Activated B cell treated with CpG ODN at 0.5 μM for 24 hours (primary cell): ENCODE measurements at regions of chr9 and their contacts with region 1.

Region 1: DNA sequence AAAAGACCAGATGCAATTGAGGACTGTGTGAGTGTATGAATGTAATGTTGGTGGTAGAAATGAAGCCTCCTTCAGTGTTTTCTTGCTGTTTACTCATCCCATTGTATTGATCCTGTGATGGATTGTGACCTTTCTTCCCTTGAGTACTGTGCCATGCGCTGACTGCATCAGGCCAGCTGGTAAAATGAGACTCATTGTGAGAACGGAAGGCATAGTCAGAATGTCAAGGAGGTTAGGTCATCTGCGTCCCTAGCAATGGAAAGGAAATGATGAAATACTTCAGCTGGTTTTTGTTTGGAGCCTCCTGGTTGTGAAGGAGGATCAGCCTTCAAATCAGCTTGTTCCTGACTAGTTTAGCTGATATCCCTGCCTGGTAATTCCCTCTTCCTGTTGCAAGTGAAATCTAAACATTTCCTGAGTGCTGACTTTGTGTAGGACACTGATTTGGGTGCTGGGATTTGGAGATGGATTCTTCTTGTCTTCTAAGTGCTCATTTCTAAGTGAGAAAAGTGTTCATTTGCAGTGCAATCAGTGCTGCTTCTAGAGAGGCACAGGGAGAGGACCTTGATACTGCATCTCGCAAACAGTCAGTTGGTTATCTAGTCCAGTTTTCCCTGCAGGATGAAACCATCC is 35.5 kb downstream of the TNFSF8 start:
- DNase-seq: no peak
- ATAC-seq: no peak
- H3K4me3 Mint-ChIP-seq: no peak overlapping the region
- H3K27ac Mint-ChIP-seq: peak overlapping the region; percentile 84
- H3K4me1 Mint-ChIP-seq: peaks cover 52% of the 10 kb centered on the region
- H3K27me3 Mint-ChIP-seq: no peaks in the 10 kb centered on the region
- CTCF ChIP-seq: no peak

Region 2: GRCh38 chr9:114805670-114806525 is 89.0 kb before region 1 on chr9 and contains the start of gene TNFSF15:
- CTCF ChIA-PET with region 1: no interaction called
- POLR2A ChIA-PET with region 1: no interaction called
- intact Hi-C with region 1: loop called (anchors 1 kb)
- DNase-seq: no peak
- ATAC-seq: peak; percentile 85
- H3K4me3 Mint-ChIP-seq: peak within 1 kb of the TSS; percentile 66
- H3K27ac Mint-ChIP-seq: peak within 1 kb of the TSS; percentile 19
- H3K4me1 Mint-ChIP-seq: peaks cover 40% of the 10 kb centered on the region
- H3K27me3 Mint-ChIP-seq: peaks cover 2% of the 10 kb centered on the region
- CTCF ChIP-seq: no peak
- total RNA-seq, gene TNFSF15: 0.10 and 0.22 TPM in 2 replicates

Region 3: DNA sequence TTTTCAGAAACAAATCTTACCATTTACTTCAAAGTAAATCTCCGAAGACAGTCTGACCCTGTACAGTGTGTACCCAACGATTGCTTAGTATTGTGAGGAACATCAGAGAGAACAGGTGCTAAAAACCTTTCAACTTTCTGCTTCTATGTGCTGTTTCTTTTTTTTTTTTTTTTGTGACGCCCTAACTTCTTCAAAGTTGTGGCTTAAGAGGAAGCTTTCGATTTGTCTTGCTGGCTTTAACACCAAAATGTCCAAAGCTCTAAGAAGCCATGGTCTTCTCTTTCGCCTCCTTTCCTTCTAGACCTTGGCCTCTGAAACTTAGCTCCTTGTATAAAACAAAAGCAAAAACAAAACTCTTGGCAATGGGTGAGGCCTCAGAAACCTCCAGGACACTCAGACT is 34.3 kb after region 1 on chr9:
- CTCF ChIA-PET with region 1: no interaction called
- POLR2A ChIA-PET with region 1: interaction called, 5 read pairs
- intact Hi-C with region 1: loop called (anchors 5 kb)
- DNase-seq: no peak
- ATAC-seq: peak; percentile 47
- H3K4me3 Mint-ChIP-seq: peak overlapping the region; percentile 80
- H3K27ac Mint-ChIP-seq: peak overlapping the region; percentile 91
- H3K4me1 Mint-ChIP-seq: peaks cover 58% of the 10 kb centered on the region
- H3K27me3 Mint-ChIP-seq: peaks cover 14% of the 10 kb centered on the region
- CTCF ChIP-seq: no peak

Region 4: GRCh38 chr9:115211413-115212124 is 316.7 kb after region 1 on chr9:
- CTCF ChIA-PET with region 1: no interaction called
- POLR2A ChIA-PET with region 1: no interaction called
- intact Hi-C with region 1: loop called (anchors 10 kb)
- DNase-seq: no peak
- ATAC-seq: peak; percentile 46
- H3K4me3 Mint-ChIP-seq: peak overlapping the region; percentile 3
- H3K27ac Mint-ChIP-seq: peak overlapping the region; percentile 43
- H3K4me1 Mint-ChIP-seq: peaks cover 68% of the 10 kb centered on the region
- H3K27me3 Mint-ChIP-seq: no peaks in the 10 kb centered on the region
- CTCF ChIP-seq: no peak